ENCODE measurements at regions of chr5 and their contacts with region 1.

Region 1: GRCh38 chr5:671459-672328 is 21.5 kb downstream of the TPPP start:
- DNase-seq: peak; percentile 72
- H3K4me3 ChIP-seq: peak overlapping the region; percentile 50
- H3K27ac ChIP-seq: peak overlapping the region; percentile 89
- H3K4me1 ChIP-seq: peaks cover 50% of the 10 kb centered on the region
- H3K27me3 ChIP-seq: no peaks in the 10 kb centered on the region
- CTCF ChIP-seq: peak; percentile 96

Region 2: DNA sequence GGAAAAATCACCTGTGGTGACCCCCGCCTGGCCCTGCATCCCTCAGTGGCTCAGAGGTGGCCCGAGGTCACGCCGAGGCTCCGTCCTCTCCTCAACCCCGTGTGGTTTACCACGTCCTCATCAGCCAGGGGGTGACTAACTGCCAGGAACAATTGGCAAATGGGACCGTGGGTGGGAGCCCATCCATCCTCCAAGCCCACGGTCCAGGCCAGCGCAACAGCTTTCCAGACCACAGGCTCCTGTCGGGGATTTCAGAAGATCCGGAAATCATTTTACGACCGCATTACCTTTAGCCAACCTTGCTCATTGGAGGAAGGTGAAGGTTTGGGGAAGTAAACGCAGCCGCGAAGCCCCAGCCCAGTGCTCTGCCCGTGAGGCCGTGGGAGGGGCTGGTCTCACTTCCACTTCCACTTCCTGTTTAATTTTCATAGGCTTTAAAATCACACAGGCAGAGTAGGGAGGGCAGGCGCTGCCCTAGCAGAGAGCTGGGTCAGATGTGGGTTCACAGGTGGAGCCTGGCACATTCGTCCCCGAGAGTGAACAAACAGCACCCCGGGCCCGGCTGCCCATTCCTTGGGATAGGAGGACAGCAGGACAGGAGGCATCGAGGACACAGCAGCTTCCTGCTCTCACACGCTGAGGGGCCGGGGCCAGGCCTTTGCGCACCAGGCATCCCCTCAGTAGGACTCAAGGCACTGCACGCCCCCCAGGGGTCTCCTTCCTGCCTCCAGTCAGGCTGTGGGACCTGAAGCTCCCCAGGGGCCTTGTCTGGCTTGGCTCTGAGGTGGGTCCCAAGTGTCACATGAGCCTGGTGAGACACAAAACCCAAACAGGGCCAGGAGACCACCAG is 127.6 kb before region 1 on chr5:
- intact Hi-C with region 1: no loop called
- DNase-seq: peak; percentile 44
- H3K4me3 ChIP-seq: no peak overlapping the region
- H3K27ac ChIP-seq: no peak overlapping the region
- H3K4me1 ChIP-seq: no peaks in the 10 kb centered on the region
- H3K27me3 ChIP-seq: peaks cover 91% of the 10 kb centered on the region
- CTCF ChIP-seq: no peak

Region 3: GRCh38 chr5:902129-902916 is 230.6 kb after region 1 on chr5:
- intact Hi-C with region 1: loop called (anchors 5 kb)
- DNase-seq: no peak
- H3K4me3 ChIP-seq: no peak overlapping the region
- H3K27ac ChIP-seq: no peak overlapping the region
- H3K4me1 ChIP-seq: peaks cover 6% of the 10 kb centered on the region
- H3K27me3 ChIP-seq: no peaks in the 10 kb centered on the region
- CTCF ChIP-seq: no peak

Measured in left ventricle myocardium inferior (tissue), 1 donor.